ENCODE measurements at regions of chr6 and their contacts with region 1.

Region 1: GRCh38 chr6:13614926-13615798 is at the start of gene NOL7:
- DNase-seq: peak; percentile 98
- H3K4me3 ChIP-seq: peak within 1 kb of the TSS; percentile 71 to 75
- H3K4me3 Mint-ChIP-seq: peak within 1 kb of the TSS; percentile 94 to 98 (median 97)
- H3K27ac ChIP-seq: peak within 1 kb of the TSS; percentile 82
- H3K27ac Mint-ChIP-seq: peak within 1 kb of the TSS; percentile 90 to 98 (median 97)
- H3K4me1 ChIP-seq: peaks cover 36% of the 10 kb centered on the region
- H3K4me1 Mint-ChIP-seq: peaks cover 25 to 54% (median 38%) of the 10 kb centered on the region in 4 donors
- H3K27me3 ChIP-seq: no peaks in the 10 kb centered on the region
- H3K27me3 Mint-ChIP-seq: no peaks in the 10 kb centered on the region
- total RNA-seq, gene NOL7: 62.1 to 69.1 TPM

Region 2: GRCh38 chr6:13559251-13559650 is 55.9 kb before region 1 on chr6:
- CTCF ChIA-PET with region 1: no interaction called
- POLR2A ChIA-PET with region 1: no interaction called
- intact Hi-C with region 1: no loop called
- DNase-seq: no peak
- H3K4me3 ChIP-seq: no peak overlapping the region
- H3K4me3 Mint-ChIP-seq: no peak overlapping the region
- H3K27ac ChIP-seq: no peak overlapping the region
- H3K27ac Mint-ChIP-seq: no peak overlapping the region
- H3K4me1 ChIP-seq: no peaks in the 10 kb centered on the region
- H3K4me1 Mint-ChIP-seq: no peaks in the 10 kb centered on the region
- H3K27me3 ChIP-seq: no peaks in the 10 kb centered on the region
- H3K27me3 Mint-ChIP-seq: no peaks in the 10 kb centered on the region

Region 3: DNA sequence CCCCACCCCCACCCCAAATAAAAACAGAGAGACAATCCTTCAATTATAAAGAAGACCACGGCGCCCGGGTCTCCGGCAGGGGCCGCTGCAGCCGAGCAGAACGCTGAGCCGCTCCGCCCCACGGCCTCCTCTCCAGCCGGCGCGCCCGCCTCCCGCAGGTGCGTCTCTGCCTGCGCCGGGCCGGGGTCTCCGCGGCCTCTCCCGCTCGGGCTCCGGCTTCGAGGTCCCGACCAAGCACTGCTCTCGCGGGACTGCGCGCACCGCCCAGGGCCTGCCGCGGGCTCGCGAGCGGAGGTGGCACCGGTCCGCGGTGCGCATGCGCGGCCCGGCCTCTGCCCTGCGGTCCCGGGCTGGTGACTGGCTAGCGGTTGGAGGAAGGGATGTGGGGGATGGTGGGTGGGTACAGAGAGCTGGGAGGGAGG is 41.0 kb before region 1 on chr6:
- CTCF ChIA-PET with region 1: interaction called, 74 read pairs
- POLR2A ChIA-PET with region 1: interaction called, 90 read pairs
- intact Hi-C with region 1: loop called (anchors 1 kb)
- DNase-seq: peak; percentile 94 to 97 (median 96)
- H3K4me3 ChIP-seq: peak overlapping the region; percentile 70 to 86
- H3K4me3 Mint-ChIP-seq: peak overlapping the region; percentile 92 to 98 (median 96)
- H3K27ac ChIP-seq: peak overlapping the region; percentile 89
- H3K27ac Mint-ChIP-seq: peak overlapping the region; percentile 96 to 99 (median 98)
- H3K4me1 ChIP-seq: peaks cover 16% of the 10 kb centered on the region
- H3K4me1 Mint-ChIP-seq: peaks cover 13 to 40% (median 24%) of the 10 kb centered on the region in 4 donors
- H3K27me3 ChIP-seq: no peaks in the 10 kb centered on the region
- H3K27me3 Mint-ChIP-seq: peaks cover 0 to 2% of the 10 kb centered on the region in 2 donors

Region 4: DNA sequence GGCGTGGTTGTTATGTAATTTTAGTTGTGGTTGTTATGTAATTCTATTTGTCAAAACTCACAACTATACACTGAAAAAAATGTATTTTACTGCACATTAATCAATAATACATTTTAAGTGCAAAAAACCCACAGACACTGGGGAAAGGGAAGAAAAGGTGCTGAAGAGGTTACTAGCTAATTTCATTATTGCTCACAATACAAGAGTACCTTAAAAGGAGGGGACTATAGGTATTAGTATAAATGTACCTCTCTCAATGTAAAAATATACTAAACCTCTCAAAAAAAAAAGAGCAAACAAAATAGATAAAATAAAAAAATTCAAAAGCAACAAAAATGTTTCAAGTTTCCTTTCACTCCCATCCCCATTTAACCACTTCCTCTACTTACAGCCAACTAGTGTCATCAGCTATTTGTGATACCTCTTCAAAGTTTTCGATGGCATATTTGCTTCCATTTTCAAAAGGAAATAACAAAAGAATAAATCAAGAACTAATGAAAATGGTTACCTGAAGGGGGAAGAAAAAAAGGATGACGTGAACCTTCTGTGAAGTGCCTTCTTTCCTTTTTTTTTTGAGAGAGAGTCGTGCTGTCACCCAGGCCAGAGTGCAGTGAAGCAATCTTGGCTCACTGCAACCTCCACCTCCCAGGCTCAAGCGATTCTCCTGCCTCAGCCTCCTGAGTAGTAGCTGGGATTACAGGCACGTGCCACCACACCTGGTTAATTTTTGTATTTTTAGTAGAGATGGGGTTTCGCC is 66.3 kb after region 1 on chr6:
- CTCF ChIA-PET with region 1: interaction called, 9 read pairs
- POLR2A ChIA-PET with region 1: interaction called, 13 read pairs
- intact Hi-C with region 1: loop called (anchors 2 kb)
- DNase-seq: peak; percentile 46 to 82 (median 71)
- H3K4me3 ChIP-seq: peak overlapping the region in 1 of 2 donors; percentile 22
- H3K4me3 Mint-ChIP-seq: peak overlapping the region; percentile 63 to 88 (median 78)
- H3K27ac ChIP-seq: peak overlapping the region; percentile 44
- H3K27ac Mint-ChIP-seq: peak overlapping the region; percentile 85 to 96 (median 92)
- H3K4me1 ChIP-seq: peaks cover 77% of the 10 kb centered on the region
- H3K4me1 Mint-ChIP-seq: peaks cover 34 to 66% (median 50%) of the 10 kb centered on the region in 4 donors
- H3K27me3 ChIP-seq: no peaks in the 10 kb centered on the region
- H3K27me3 Mint-ChIP-seq: no peaks in the 10 kb centered on the region

Region 5: GRCh38 chr6:13702809-13703302 is 87.7 kb after region 1 on chr6:
- CTCF ChIA-PET with region 1: interaction called, 7 read pairs
- POLR2A ChIA-PET with region 1: interaction called, 12 read pairs
- intact Hi-C with region 1: no loop called
- DNase-seq: no peak
- H3K4me3 ChIP-seq: no peak overlapping the region
- H3K4me3 Mint-ChIP-seq: no peak overlapping the region
- H3K27ac ChIP-seq: no peak overlapping the region
- H3K27ac Mint-ChIP-seq: no peak overlapping the region
- H3K4me1 ChIP-seq: peaks cover 80% of the 10 kb centered on the region
- H3K4me1 Mint-ChIP-seq: peaks cover 28 to 50% (median 36%) of the 10 kb centered on the region in 4 donors
- H3K27me3 ChIP-seq: no peaks in the 10 kb centered on the region
- H3K27me3 Mint-ChIP-seq: no peaks in the 10 kb centered on the region

Region 6: DNA sequence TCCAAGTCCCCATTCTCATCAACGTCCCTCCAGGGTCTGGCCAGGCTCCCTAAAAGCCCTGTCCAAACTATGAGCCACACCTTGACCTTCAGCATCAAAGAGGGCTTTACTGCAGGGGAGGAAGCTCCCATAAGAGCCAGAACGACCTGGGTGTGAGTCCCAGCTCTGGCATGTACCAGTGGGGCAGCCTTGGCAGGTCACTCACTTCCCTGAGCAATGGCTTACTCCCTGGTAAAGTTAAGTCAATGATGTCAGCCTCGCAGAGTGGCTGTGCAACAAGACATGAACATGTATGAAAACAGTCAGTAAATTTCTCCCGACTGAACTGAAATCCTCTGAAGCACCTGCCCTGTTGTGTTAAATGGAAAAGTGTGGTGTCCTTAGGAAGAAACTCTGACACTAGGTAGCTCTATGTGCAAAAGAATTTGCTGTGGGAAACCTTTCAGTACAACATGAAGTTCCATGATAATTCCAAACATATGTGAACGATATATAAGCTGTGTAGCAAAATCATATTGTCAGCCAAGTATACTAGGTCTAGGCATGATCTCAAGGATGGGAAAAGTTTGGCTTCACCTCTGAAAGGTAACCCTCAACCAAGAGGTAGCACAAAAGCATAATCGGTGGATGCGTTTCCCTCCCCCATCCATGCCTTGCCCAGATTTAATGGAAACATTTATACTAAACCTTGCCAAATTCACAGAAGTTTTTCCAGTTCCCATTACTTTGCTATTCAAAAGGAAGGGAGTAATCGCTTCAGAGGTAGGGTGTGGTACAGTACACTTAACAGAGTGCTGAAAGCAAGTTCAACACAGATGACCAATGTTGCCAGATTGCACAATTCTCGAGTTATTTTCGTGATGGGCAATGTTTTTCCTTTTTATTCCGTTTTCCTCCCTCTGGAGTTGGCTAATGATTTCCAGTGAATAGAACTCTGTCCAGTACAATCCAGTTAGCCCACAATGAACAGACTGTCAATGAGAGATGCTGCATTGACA is 145.4 kb after region 1 on chr6:
- CTCF ChIA-PET with region 1: interaction called, 10 read pairs
- POLR2A ChIA-PET with region 1: interaction called, 7 read pairs
- intact Hi-C with region 1: no loop called
- DNase-seq: no peak
- H3K4me3 ChIP-seq: no peak overlapping the region
- H3K4me3 Mint-ChIP-seq: no peak overlapping the region
- H3K27ac ChIP-seq: no peak overlapping the region
- H3K27ac Mint-ChIP-seq: peak overlapping the region in 1 of 7 donors; percentile 4
- H3K4me1 ChIP-seq: peaks cover 18% of the 10 kb centered on the region
- H3K4me1 Mint-ChIP-seq: peaks cover 17 to 33% (median 23%) of the 10 kb centered on the region in 4 donors
- H3K27me3 ChIP-seq: no peaks in the 10 kb centered on the region
- H3K27me3 Mint-ChIP-seq: no peaks in the 10 kb centered on the region

Measured in CD4-positive, alpha-beta memory T cell (primary cell).